Caco-2 (cell line): ENCODE measurements at regions of chr12 and their contacts with region 1.

Region 1: GRCh38 chr12:64801381-64801780 is 23.1 kb upstream of the TBC1D30 start:
- DNase-seq: no peak
- H3K4me3 ChIP-seq: no peak overlapping the region
- H3K4me3 Mint-ChIP-seq: no peak overlapping the region
- H3K27ac Mint-ChIP-seq: no peak overlapping the region
- H3K4me1 ChIP-seq: peaks cover 28% of the 10 kb centered on the region
- H3K4me1 Mint-ChIP-seq: peaks cover 25% of the 10 kb centered on the region
- H3K27me3 ChIP-seq: no peaks in the 10 kb centered on the region
- H3K27me3 Mint-ChIP-seq: no peaks in the 10 kb centered on the region
- CTCF ChIP-seq: peak; percentile 9 to 38

Region 2: DNA sequence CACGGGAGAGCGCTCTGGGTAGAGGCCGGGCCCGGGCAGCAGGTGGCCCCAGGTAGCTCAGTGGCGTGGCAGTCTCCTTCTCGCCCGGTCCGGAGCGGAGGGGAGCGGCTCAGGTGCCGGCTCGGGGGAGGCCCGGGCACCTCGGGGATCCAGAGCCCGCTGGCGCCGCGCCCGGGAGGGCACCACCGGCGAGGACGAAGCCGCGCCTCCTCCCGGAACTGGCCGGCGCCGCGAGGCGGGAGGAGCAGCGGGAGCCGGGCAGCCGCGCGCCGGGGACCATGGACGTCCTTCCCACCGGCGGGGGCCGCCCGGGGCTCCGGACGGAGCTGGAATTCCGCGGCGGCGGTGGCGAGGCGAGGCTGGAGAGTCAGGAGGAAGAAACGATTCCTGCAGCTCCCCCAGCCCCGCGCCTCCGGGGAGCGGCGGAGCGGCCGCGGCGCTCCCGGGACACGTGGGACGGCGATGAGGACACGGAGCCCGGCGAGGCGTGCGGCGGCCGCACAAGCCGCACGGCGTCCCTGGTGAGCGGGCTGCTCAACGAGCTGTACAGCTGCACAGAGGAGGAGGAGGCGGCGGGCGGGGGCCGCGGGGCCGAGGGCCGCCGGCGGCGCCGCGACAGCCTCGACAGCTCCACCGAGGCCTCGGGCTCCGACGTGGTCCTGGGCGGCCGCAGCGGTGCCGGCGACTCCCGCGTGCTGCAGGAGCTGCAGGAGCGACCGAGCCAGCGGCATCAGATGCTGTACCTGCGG is 20.7 kb before region 1 on chr12:
- CTCF ChIA-PET with region 1: interaction called, 19 read pairs
- POLR2A ChIA-PET with region 1: interaction called, 8 read pairs
- intact Hi-C with region 1: no loop called
- DNase-seq: peak; percentile 64 to 75
- H3K4me3 ChIP-seq: peak overlapping the region; percentile 49
- H3K4me3 Mint-ChIP-seq: peak overlapping the region; percentile 90
- H3K27ac Mint-ChIP-seq: peak overlapping the region; percentile 80
- H3K4me1 ChIP-seq: peaks cover 19% of the 10 kb centered on the region
- H3K4me1 Mint-ChIP-seq: peaks cover 7% of the 10 kb centered on the region
- H3K27me3 ChIP-seq: no peaks in the 10 kb centered on the region
- H3K27me3 Mint-ChIP-seq: no peaks in the 10 kb centered on the region
- CTCF ChIP-seq: peak in 1 of 2 experiments; percentile 24

Region 3: DNA sequence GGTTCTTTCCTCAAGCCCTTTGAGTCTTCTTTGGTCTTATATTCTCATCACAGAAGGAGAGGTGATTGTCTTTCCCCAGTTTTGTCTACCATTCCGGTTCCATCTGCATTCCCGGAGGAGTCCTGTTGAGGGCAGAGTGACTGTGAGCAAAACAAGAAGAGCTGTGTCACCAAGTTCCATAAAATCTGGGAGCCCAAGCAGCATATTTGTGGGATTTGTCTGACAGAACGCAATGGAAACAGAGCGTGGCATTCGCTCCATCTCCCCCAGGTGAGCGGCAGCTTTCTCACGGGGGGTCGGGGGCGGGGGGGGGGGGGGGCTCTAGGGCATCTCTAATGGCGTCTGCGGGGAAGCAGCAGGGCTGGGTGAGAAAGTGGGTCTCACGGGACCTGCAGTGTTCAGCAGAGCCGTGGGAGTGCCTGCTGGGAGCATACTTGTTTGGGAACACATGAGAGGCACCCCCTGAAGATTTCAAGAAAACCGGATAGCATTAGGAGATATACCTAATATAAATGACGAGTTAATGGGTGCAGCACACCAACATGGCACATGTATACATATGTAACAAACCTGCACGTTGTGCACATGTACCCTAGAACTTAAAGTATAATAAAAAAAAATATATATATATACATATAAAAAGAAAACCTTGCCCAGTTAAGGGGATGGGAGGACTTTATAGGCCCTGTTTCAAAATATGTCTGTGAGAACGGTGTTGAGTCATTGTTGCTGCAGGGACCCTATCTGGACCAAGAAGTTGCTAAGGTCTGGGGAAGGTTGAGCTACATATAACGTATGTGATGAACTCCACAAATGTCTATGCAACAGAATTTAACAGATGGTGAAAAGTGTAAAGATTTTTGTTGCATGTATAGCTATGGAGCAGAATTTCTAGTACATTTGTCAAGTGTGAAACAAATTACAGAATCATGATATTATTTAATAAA is 82.5 kb after region 1 on chr12:
- CTCF ChIA-PET with region 1: interaction called, 18 read pairs
- POLR2A ChIA-PET with region 1: no interaction called
- intact Hi-C with region 1: no loop called
- DNase-seq: peak; percentile 34 to 42
- H3K4me3 ChIP-seq: no peak overlapping the region
- H3K4me3 Mint-ChIP-seq: no peak overlapping the region
- H3K27ac Mint-ChIP-seq: peak overlapping the region; percentile 37
- H3K4me1 ChIP-seq: peaks cover 27% of the 10 kb centered on the region
- H3K4me1 Mint-ChIP-seq: peaks cover 22% of the 10 kb centered on the region
- H3K27me3 ChIP-seq: no peaks in the 10 kb centered on the region
- H3K27me3 Mint-ChIP-seq: no peaks in the 10 kb centered on the region
- CTCF ChIP-seq: no peak

Region 4: DNA sequence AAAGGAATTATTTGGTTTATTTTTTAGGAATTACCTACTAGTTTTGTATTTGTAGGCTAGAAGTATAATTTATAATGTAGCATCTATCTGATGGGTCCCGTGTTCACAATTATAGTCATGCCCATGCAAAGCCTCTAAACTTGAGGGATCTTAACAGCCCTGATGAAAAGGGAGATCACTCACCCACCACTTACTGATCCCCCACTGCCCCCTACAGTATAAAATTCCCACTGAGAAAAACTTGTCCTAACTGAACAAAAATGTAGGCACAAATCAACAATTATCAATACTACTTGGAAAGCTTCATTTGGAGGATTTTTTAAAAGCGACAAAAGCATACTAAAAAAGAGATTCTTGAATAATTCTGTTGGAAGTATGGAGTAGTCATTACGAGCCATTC is 298.8 kb after region 1 on chr12:
- CTCF ChIA-PET with region 1: no interaction called
- POLR2A ChIA-PET with region 1: no interaction called
- intact Hi-C with region 1: loop called (anchors 1 kb)
- DNase-seq: peak in 1 of 2 experiments; percentile 52
- H3K4me3 ChIP-seq: no peak overlapping the region
- H3K4me3 Mint-ChIP-seq: no peak overlapping the region
- H3K27ac Mint-ChIP-seq: no peak overlapping the region
- H3K4me1 ChIP-seq: no peaks in the 10 kb centered on the region
- H3K4me1 Mint-ChIP-seq: no peaks in the 10 kb centered on the region
- H3K27me3 ChIP-seq: no peaks in the 10 kb centered on the region
- H3K27me3 Mint-ChIP-seq: no peaks in the 10 kb centered on the region
- CTCF ChIP-seq: peak; percentile 44 to 49

Region 5: GRCh38 chr12:65123435-65124063 is 322.2 kb after region 1 on chr12:
- CTCF ChIA-PET with region 1: no interaction called
- POLR2A ChIA-PET with region 1: no interaction called
- intact Hi-C with region 1: loop called (anchors 1 kb)
- DNase-seq: peak in 1 of 2 experiments; percentile 53
- H3K4me3 ChIP-seq: no peak overlapping the region
- H3K4me3 Mint-ChIP-seq: no peak overlapping the region
- H3K27ac Mint-ChIP-seq: no peak overlapping the region
- H3K4me1 ChIP-seq: no peaks in the 10 kb centered on the region
- H3K4me1 Mint-ChIP-seq: no peaks in the 10 kb centered on the region
- H3K27me3 ChIP-seq: no peaks in the 10 kb centered on the region
- H3K27me3 Mint-ChIP-seq: no peaks in the 10 kb centered on the region
- CTCF ChIP-seq: peak; percentile 62 to 68